ENCODE measurements at regions of chrX and their contacts with region 1.

Region 1: DNA sequence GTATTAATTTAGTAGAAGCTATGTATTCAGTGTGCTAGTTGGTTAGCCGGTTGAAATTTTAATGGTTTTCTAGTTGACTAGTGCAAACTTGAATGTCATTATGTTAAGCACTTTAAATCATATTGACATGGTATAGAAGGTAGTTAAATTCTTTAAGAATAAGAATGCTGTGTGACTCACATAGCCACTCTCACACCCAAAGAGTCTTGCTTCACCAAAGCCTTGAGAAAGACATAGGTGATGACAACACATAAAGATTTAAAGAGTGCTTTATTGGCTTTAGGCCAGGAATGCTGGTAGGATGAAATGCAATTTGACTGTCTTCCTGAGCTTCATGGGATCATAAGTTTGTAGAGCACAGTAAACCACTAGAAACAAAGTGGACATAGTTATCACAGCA is 85.3 kb downstream of the DCAF8L2 start:
- DNase-seq: no peak
- H3K4me3 ChIP-seq: no peak overlapping the region
- H3K27ac ChIP-seq: no peak overlapping the region
- H3K4me1 ChIP-seq: no peaks in the 10 kb centered on the region
- H3K27me3 ChIP-seq: no peaks in the 10 kb centered on the region
- CTCF ChIP-seq: no peak
- EP300 ChIP-seq: no peak
- POLR2A ChIP-seq: no peak

Region 2: GRCh38 chrX:27565992-27566391 is 109.5 kb before region 1 on chrX:
- in situ Hi-C with region 1: loop called in 1 of 4 experiments (anchors 10 kb)
- intact Hi-C with region 1: no loop called
- DNase-seq: no peak
- H3K4me3 ChIP-seq: no peak overlapping the region
- H3K27ac ChIP-seq: no peak overlapping the region
- H3K4me1 ChIP-seq: no peaks in the 10 kb centered on the region
- H3K27me3 ChIP-seq: no peaks in the 10 kb centered on the region
- CTCF ChIP-seq: no peak
- EP300 ChIP-seq: no peak
- POLR2A ChIP-seq: no peak

Region 3: DNA sequence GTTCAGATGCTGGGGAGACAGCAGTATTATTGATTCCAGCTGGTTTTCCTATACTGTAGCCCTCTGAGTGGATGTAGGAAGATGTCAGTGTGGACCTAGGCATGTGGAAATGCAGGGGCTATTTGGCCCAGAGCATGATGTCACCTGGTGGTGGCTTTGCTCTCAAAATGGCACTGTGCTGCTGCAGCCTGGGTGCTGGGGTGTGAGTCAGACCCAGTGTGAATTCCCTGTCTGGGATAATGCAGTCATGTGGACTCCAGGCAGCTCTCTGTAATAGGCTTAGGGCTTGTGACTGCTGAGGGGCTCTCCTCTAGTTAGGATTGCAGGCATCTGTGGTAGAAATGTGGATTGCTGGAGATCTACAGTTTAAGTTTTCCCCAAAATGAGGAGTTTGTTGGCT is 14.6 kb before region 1 on chrX:
- in situ Hi-C with region 1: no loop called
- intact Hi-C with region 1: loop called (anchors 1 kb)
- DNase-seq: no peak
- H3K4me3 ChIP-seq: no peak overlapping the region
- H3K27ac ChIP-seq: no peak overlapping the region
- H3K4me1 ChIP-seq: no peaks in the 10 kb centered on the region
- H3K27me3 ChIP-seq: no peaks in the 10 kb centered on the region
- CTCF ChIP-seq: no peak
- EP300 ChIP-seq: no peak
- POLR2A ChIP-seq: no peak